IMR-90 (cell line): ENCODE measurements at regions of chr6 and their contacts with region 1.

Region 1: DNA sequence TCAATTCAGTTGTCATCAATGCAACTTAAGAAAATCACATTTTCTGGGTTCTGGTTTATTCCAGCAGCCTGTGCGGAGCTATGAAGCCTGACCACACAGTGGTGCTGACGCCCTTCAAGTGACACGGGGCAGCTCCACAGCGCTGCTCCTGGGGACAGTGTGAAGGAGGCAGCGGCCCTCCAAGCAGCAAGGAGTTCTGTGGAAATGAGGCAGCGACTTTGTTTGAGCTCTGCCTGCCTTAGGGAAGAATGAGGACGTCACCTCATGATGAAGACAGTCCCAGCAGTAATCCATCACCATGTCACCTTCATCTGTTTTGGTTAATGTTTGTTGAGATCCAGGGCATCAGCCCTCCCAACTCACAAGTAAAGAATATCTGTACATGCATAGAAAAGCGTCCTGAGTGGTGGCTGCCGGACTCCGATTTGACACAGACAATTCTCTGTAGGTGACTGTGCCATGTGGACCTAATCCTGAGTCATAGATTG is 168.5 kb upstream of the UST start:
- DNase-seq: peak; percentile 80
- ATAC-seq: peak; percentile 100
- H3K4me3 ChIP-seq: no peak overlapping the region
- H3K27ac ChIP-seq: no peak overlapping the region
- H3K4me1 ChIP-seq: peaks cover 1% of the 10 kb centered on the region; the same call in 1 of the 2 replicates
- H3K27me3 ChIP-seq: no peaks in the 10 kb centered on the region
- CTCF ChIP-seq: peak; percentile 99
- POLR2A ChIP-seq: no peak
- RAD21 ChIP-seq: peak; percentile 95

Region 2: DNA sequence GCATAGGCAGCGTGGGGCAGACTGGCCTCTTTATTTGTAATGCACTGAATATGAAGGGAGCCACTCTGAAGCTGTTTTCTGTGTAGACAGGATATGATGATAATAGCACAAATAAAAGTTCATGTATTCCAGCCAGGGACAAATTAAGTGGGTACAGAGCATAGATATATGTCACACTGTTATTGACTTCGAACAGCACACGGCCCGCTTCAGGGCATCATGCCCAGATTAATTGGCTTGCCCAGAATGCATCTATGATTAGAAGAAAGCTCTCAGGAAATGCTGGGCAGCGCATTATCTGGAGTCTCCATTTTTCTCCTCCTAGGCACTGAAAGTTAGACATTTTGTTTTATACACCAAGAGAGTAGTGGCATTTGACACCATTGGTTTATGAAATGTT is 262.0 kb before region 1 on chr6:
- CTCF ChIA-PET with region 1: no interaction called
- POLR2A ChIA-PET with region 1: no interaction called
- dilution Hi-C with region 1: no loop called
- in situ Hi-C with region 1: no loop called
- intact Hi-C with region 1: no loop called
- DNase-seq: no peak
- ATAC-seq: no peak
- H3K4me3 ChIP-seq: no peak overlapping the region
- H3K27ac ChIP-seq: no peak overlapping the region
- H3K4me1 ChIP-seq: 0 out of 2 replicates have a peak, but pooled peaks cover 5% of the 10 kb centered on the region
- H3K27me3 ChIP-seq: no peaks in the 10 kb centered on the region
- CTCF ChIP-seq: no peak
- POLR2A ChIP-seq: no peak
- RAD21 ChIP-seq: no peak

Region 3: GRCh38 chr6:148379966-148380713 is 198.1 kb before region 1 on chr6:
- CTCF ChIA-PET with region 1: no interaction called
- POLR2A ChIA-PET with region 1: no interaction called
- dilution Hi-C with region 1: no loop called
- in situ Hi-C with region 1: no loop called
- intact Hi-C with region 1: no loop called
- DNase-seq: no peak
- ATAC-seq: no peak
- H3K4me3 ChIP-seq: no peak overlapping the region
- H3K27ac ChIP-seq: no peak overlapping the region
- H3K4me1 ChIP-seq: peaks cover 3% of the 10 kb centered on the region
- H3K27me3 ChIP-seq: no peaks in the 10 kb centered on the region
- CTCF ChIP-seq: no peak
- POLR2A ChIP-seq: no peak
- RAD21 ChIP-seq: no peak

Region 4: DNA sequence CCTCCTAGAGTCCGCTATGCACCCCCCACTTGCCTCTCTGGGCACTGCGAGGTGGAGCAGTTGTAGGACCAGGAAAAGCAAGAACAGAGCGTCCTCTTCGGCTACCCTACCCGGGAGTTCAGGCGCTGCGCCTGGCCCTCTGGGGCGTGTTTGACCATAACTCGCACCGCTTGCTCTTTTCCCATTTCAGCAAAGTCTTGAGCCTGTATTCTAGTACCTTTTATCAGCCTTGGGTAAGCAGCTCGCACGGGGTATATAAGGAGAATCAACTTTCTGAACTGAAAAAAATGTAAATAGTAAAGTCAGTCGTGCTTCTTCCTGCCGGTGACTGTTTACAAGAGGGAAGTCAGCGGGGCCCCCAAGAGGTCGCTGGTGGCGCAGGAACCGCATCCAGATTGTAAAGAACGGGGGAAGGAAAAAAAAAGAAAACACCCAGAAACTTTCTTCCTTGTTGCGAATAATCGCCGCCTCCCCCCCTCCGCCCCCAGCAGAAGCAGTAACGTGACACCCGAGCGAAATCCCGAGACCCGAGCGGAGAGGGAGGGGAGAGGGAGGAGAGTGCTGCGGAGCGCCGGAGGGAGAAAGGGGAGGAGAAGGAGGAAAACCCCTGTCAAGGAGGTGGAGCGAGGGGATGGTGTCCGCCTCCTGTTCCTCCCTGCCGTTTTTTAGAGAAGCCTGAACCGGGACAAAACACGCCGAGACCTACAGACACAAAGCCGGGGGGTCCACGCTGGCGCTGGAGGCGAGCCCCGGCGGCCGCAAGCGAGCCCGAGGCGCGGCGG is 168.3 kb after region 1 on chr6 and contains the start of gene UST:
- CTCF ChIA-PET with region 1: interaction called, 7 read pairs
- POLR2A ChIA-PET with region 1: no interaction called
- dilution Hi-C with region 1: no loop called
- in situ Hi-C with region 1: no loop called
- intact Hi-C with region 1: loop called (anchors 1 kb)
- DNase-seq: peak; percentile 95
- ATAC-seq: peak; percentile 92
- H3K4me3 ChIP-seq: peak within 1 kb of the TSS; percentile 87
- H3K27ac ChIP-seq: peak within 1 kb of the TSS; percentile 90
- H3K4me1 ChIP-seq: peaks cover 4% of the 10 kb centered on the region
- H3K27me3 ChIP-seq: no peaks in the 10 kb centered on the region
- CTCF ChIP-seq: peak; percentile 58
- POLR2A ChIP-seq: peak; percentile 57; the same call in 1 of the 2 replicates
- RAD21 ChIP-seq: peak; percentile 69
- total RNA-seq, gene UST: 13.8 and 14.4 TPM in 2 replicates

Region 5: GRCh38 chr6:148824291-148824690 is 246.0 kb after region 1 on chr6:
- CTCF ChIA-PET with region 1: no interaction called
- POLR2A ChIA-PET with region 1: no interaction called
- dilution Hi-C with region 1: no loop called
- in situ Hi-C with region 1: no loop called
- intact Hi-C with region 1: no loop called
- DNase-seq: no peak
- ATAC-seq: no peak
- H3K4me3 ChIP-seq: no peak overlapping the region
- H3K27ac ChIP-seq: no peak overlapping the region
- H3K4me1 ChIP-seq: peaks cover 3% of the 10 kb centered on the region; the same call in 1 of the 2 replicates
- H3K27me3 ChIP-seq: no peaks in the 10 kb centered on the region
- CTCF ChIP-seq: no peak
- POLR2A ChIP-seq: no peak
- RAD21 ChIP-seq: no peak

Region 6: DNA sequence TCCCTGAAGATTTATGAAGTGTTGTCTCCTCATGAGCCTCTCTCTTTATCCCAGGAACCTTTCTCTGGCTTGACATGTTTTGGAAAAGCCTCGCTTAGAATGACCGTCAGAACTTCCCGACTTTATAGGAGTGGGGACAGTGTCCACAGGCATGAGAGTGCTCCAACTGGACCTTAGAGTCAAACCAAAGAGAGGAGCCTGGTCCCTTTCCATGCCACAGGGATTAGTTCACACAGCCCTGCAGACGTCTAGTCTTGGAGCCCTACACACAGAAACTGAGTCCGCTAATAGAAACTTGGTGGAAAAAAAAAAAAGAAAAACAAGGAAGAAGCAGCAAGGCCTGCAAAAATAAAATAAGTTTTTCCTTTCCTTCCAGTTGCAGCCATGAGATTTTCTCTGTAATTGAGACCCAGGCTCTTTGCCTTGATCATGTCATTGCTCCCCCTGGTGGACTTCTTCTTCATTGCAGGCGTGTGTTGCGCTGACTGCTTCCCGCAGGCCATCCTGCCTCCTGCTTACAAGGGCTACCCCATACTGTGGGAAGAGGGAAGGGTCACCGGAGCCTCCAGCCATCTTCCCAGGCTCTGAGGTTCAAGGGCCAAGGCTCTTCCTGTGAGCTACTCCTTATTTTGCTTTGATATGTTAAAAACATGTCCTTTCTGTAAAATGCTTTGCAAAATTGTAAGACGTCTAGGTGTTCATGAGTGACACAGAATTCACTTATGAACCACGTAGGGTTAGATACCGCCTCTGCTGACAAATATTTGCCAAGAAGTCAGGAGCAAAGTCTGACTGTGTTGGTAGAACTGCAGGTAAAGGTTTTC is 369.5 kb after region 1 on chr6:
- CTCF ChIA-PET with region 1: interaction called, 5 read pairs
- POLR2A ChIA-PET with region 1: no interaction called
- dilution Hi-C with region 1: no loop called
- in situ Hi-C with region 1: loop called (anchors 5 kb)
- intact Hi-C with region 1: loop called (anchors 1 kb)
- DNase-seq: peak; percentile 82
- ATAC-seq: peak; percentile 91
- H3K4me3 ChIP-seq: no peak overlapping the region
- H3K27ac ChIP-seq: no peak overlapping the region
- H3K4me1 ChIP-seq: peaks cover 4% of the 10 kb centered on the region
- H3K27me3 ChIP-seq: no peaks in the 10 kb centered on the region
- CTCF ChIP-seq: peak; percentile 79
- POLR2A ChIP-seq: no peak
- RAD21 ChIP-seq: peak; percentile 88

Region 7: DNA sequence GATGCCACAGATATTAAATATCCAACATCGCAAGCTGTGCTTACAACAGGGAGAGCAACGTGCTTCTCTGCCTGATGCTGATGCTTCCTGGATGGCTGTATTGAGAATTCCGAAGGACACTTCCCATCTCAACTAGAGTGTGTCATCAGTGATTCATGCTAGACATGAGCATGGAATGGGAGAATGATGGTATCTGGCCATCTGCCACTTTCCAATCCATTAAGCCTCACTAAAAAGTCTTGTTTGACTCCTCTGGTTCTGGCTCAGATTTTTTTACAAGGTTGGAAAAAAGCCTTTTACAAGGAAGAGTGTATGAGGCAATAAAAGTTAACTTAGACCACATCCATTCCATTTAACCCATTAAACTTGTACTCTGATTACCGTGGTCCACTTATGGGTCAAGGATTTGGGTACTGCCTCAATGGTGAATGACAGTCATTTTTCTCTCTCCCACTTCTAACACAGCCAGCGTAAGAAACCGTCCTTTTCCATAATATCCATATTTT is 433.8 kb after region 1 on chr6:
- CTCF ChIA-PET with region 1: no interaction called
- POLR2A ChIA-PET with region 1: no interaction called
- dilution Hi-C with region 1: no loop called
- in situ Hi-C with region 1: no loop called
- intact Hi-C with region 1: loop called (anchors 5 kb)
- DNase-seq: peak; percentile 100
- ATAC-seq: peak; percentile 81
- H3K4me3 ChIP-seq: no peak overlapping the region
- H3K27ac ChIP-seq: no peak overlapping the region
- H3K4me1 ChIP-seq: peaks cover 20% of the 10 kb centered on the region
- H3K27me3 ChIP-seq: no peaks in the 10 kb centered on the region
- CTCF ChIP-seq: no peak
- POLR2A ChIP-seq: peak; percentile 39; the same call in 1 of the 2 replicates
- RAD21 ChIP-seq: no peak

Region 8: DNA sequence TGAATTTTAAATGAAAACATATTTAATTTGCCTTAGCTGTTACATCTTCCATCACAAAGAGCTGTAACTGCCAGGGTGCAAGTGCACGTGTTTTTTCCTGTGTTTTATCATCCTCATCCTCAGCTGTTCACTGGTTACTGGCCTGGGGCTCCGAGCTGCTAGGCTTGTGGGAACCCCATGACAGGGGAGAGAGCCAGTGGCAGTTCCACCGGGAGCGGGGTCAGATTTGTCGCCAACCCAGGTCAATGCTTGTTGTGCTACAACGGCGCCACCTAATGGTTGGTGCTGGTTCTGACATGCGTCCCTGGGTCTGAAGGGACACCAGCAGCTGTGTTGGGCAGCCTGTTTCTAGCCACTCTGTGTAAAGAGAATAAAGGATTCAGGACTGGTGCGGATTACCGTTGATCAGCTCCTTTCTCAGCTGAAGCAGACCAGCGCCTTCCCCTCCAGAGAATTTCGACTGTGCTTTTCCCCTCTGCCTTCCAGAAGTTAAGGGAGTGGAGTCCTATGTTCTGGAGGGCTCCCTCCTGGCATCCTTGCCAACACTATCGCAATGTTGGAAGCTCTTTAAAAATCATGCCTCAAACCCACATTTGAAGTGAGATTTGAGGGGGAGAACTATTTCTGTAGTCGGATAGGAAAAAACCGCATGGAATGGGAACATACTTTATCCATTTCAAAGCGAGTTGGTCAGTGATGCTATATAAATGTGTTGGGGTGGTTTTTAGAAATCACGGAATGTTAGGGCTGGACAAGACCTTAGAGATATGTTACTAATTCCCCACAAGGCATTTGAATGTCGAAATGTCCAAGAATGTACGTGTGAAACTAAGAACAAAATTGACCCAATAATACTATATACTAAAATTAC is 853.9 kb after region 1 on chr6:
- CTCF ChIA-PET with region 1: no interaction called
- POLR2A ChIA-PET with region 1: no interaction called
- dilution Hi-C with region 1: no loop called
- in situ Hi-C with region 1: loop called (anchors 10 kb)
- intact Hi-C with region 1: loop called (anchors 10 kb)
- DNase-seq: peak; percentile 74
- ATAC-seq: peak; percentile 98
- H3K4me3 ChIP-seq: no peak overlapping the region
- H3K27ac ChIP-seq: no peak overlapping the region
- H3K4me1 ChIP-seq: 0 out of 2 replicates have a peak, but pooled peaks cover 2% of the 10 kb centered on the region
- H3K27me3 ChIP-seq: peaks cover 2% of the 10 kb centered on the region
- CTCF ChIP-seq: peak; percentile 93
- POLR2A ChIP-seq: no peak
- RAD21 ChIP-seq: peak; percentile 99